ENCODE measurements at regions of chr15 and their contacts with region 1.

Region 1: DNA sequence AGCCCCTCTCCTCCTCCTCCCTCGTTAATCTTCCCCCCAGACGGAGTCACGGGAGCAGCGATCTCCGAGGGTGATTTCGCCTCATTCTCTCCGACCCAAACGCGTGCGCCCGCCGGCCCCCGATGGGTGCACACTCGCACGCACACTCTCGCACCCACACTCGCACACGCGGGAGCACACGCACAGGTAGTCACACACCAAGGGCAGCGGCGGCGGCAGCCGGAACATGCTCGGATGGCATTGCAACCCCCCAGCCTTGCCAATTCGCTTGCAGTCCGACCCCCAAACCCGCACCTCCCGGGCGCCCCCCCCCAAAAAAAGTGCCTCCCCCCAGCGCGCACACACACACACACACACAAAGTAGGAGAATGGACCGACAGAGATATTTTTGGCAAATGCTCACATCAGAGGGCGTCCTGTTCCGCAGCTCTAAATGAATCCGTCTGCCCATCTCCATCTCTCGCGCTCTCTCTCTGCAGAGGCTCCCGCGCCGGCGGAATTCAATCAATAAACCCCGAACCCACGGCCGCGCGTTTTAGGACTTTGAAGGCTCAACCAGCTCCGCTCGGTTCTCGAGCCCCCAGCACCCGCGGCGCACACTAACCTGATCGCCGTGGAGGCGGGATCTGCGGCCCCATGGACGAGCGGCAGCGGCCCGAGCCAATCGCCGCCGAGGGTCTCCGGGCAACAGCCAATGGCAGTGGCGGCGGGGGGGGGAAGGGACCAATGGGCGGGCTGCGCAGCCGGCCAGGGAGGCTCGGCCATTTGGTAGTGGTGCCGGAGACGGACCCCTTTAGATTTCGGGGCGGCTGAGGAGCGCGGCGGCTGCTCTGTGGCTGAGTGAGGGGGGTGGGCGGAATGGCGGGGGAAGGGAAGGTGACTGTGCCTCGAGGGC is at the start of gene ANP32A:
- DNase-seq: peak; percentile 98
- ATAC-seq: peak; percentile 76
- H3K4me3 Mint-ChIP-seq: peak within 1 kb of the TSS; percentile 99
- H3K27ac Mint-ChIP-seq: peak within 1 kb of the TSS; percentile 98
- H3K4me1 Mint-ChIP-seq: peaks cover 26% of the 10 kb centered on the region
- H3K27me3 Mint-ChIP-seq: no peaks in the 10 kb centered on the region
- total RNA-seq, gene ANP32A: 252 to 439 TPM

Region 2: DNA sequence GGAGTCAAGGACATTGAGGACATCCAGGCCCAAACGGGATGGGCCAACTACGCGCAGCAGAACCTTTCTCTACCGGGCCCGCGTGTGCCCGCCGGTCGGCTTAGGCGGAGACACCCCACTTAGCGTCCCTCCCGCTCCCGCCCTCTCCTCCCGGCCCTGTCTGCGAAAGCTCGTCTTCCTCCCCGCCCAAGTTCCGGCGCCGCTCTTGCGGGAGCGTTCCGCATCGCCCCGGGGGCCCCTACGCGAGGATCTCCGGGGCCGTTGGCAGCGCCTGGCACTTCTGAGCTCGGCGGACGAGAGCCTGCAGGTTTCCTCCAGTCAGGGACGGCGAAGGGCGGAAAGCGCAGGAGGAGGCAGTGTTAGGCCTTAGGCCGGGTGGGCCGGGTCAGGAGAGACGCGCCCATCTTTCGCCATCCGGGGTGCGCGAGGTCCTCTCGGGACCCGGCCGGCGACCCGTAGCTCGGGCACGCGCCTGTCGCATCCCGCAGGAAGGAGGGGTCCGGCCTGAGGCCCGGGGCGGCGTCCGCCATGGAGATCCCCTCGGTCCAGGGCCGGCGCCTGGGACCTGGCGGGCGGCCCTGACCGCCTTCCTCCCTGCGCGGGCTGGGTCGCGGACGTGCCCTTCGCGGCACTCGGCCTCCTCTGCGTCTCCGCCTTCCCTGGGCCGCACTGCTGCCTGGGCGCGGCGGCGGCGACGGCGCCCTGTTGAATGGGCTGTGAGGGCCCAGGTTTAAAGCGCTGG is 542.8 kb before region 1 on chr15 and contains the start of gene FEM1B:
- CTCF ChIA-PET with region 1: no interaction called
- POLR2A ChIA-PET with region 1: no interaction called
- intact Hi-C with region 1: loop called (anchors 1 to 10 kb)
- DNase-seq: peak; percentile 94
- ATAC-seq: peak; percentile 79
- H3K4me3 Mint-ChIP-seq: peak within 1 kb of the TSS; percentile 99
- H3K27ac Mint-ChIP-seq: peak within 1 kb of the TSS; percentile 99
- H3K4me1 Mint-ChIP-seq: peaks cover 43% of the 10 kb centered on the region
- H3K27me3 Mint-ChIP-seq: no peaks in the 10 kb centered on the region
- total RNA-seq, gene FEM1B: 41.1 to 50.0 TPM

Region 3: DNA sequence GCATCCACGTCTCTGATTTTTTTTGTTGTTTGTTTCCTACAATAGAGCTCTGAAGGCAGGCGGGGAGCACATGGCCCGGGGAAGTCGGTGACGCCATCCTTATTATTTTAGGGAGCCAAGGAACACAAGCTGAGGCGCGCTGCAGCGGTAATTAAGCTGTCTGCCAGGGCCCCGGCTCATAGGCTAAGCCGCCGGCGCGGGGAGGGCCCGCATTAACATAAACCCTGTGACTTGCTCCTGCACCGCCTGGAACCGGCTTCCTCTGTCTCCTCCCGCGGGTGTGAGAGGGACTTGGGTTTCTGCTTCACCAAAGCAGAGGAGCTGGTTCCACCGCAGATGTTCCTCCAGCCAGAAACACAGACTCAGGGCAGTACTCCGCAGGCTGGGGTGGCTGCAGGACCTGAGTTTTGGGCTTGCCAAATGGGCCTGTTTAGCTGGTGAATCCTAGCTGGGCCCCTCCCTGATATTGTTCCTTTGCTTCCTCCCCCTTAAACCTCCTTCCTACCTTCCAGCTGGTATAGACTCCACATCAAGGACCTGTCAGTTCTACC is 25.2 kb before region 1 on chr15:
- CTCF ChIA-PET with region 1: interaction called, 7 read pairs
- POLR2A ChIA-PET with region 1: interaction called, 6 read pairs
- intact Hi-C with region 1: loop called (anchors 1 kb)
- DNase-seq: peak; percentile 87
- ATAC-seq: peak; percentile 79
- H3K4me3 Mint-ChIP-seq: no peak overlapping the region
- H3K27ac Mint-ChIP-seq: peak overlapping the region; percentile 40
- H3K4me1 Mint-ChIP-seq: peaks cover 99% of the 10 kb centered on the region
- H3K27me3 Mint-ChIP-seq: no peaks in the 10 kb centered on the region

Region 4: DNA sequence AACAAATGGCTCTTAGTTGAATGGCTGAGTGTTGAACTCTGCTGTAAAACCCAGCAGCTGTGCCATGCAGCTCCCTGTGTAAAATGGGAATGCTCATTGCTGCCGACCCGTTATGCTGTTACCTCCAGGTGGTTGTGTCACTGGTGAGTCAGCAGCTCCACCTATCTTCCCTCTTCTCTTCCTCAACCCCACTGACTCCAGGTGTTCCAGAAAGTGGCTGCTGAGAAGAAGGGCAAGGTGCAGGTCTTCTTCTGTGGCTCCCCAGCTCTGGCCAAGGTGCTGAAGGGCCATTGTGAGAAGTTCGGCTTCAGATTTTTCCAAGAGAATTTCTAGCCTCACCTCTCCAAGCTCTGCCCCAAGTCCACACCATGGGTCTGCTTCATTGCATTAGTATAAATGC is 235.8 kb after region 1 on chr15:
- CTCF ChIA-PET with region 1: no interaction called
- POLR2A ChIA-PET with region 1: no interaction called
- intact Hi-C with region 1: no loop called
- DNase-seq: no peak
- ATAC-seq: no peak
- H3K4me3 Mint-ChIP-seq: no peak overlapping the region
- H3K27ac Mint-ChIP-seq: no peak overlapping the region
- H3K4me1 Mint-ChIP-seq: peaks cover 20% of the 10 kb centered on the region
- H3K27me3 Mint-ChIP-seq: peaks cover 13% of the 10 kb centered on the region

Region 5: DNA sequence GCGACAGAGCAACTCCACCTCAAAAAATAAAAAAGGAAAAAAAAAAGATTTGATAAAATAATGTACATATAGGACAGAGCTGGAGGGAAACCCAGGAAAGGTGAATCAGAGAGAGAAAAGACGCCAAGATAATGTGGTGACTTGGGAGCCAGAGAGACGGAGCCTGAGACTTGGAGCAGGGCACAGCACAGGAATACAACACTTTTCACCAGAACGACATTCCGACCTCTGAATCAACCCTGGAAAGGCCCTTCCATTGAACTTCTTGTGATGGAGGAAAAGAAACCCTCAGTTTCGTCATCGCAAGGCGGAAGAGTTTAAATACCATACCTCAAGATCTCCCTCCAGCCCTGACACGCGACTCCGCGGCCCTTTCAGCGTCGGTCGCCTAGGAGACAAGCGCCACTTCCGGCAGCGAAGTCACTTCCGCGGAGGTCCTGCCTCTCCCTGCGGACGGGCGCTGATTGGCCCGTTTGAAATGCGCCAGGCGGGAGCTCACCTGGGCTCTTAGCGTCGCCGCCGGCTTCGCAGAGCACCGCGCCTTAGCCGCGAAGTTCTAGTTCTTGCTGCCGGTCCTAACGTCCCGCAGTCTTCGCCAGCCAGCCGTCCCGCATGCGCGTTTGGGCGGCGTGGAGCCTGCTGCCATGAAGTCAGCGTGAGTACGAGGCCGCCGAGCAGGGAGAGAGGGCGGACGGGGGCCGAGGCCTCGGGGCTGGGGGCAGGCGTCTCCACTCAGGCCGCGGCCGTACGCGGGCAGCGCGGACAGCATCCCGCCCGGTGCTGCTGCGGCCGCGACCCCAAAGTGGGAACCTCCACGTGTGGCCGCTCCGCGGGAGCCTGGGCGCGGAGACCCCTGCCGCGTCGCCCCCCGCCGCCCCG is 593.5 kb after region 1 on chr15 and contains the start of gene KIF23:
- CTCF ChIA-PET with region 1: no interaction called
- POLR2A ChIA-PET with region 1: no interaction called
- intact Hi-C with region 1: loop called in 1 of 2 experiments (anchors 5 kb)
- DNase-seq: peak; percentile 96
- ATAC-seq: peak; percentile 95
- H3K4me3 Mint-ChIP-seq: peak within 1 kb of the TSS; percentile 85
- H3K27ac Mint-ChIP-seq: peak within 1 kb of the TSS; percentile 69
- H3K4me1 Mint-ChIP-seq: peaks cover 13% of the 10 kb centered on the region
- H3K27me3 Mint-ChIP-seq: peaks cover 5% of the 10 kb centered on the region
- total RNA-seq, gene KIF23: 47.2 to 48.0 TPM

Region 6: GRCh38 chr15:69452692-69453521 is 632.4 kb after region 1 on chr15 and contains the start of gene RPLP1:
- CTCF ChIA-PET with region 1: no interaction called
- POLR2A ChIA-PET with region 1: interaction called, 4 read pairs
- intact Hi-C with region 1: loop called (anchors 1 to 10 kb)
- DNase-seq: peak; percentile 97
- ATAC-seq: peak; percentile 94
- H3K4me3 Mint-ChIP-seq: peak within 1 kb of the TSS; percentile 91
- H3K27ac Mint-ChIP-seq: peak within 1 kb of the TSS; percentile 99
- H3K4me1 Mint-ChIP-seq: peaks cover 24% of the 10 kb centered on the region
- H3K27me3 Mint-ChIP-seq: no peaks in the 10 kb centered on the region
- total RNA-seq, gene RPLP1: 1,576 to 2,330 TPM